HEK293T (cell line): ENCODE measurements at regions of chr2 and their contacts with region 1.

Region 1: GRCh38 chr2:54675738-54676137 is 47.7 kb upstream of the EML6 start:
- DNase-seq: no peak

Region 2: DNA sequence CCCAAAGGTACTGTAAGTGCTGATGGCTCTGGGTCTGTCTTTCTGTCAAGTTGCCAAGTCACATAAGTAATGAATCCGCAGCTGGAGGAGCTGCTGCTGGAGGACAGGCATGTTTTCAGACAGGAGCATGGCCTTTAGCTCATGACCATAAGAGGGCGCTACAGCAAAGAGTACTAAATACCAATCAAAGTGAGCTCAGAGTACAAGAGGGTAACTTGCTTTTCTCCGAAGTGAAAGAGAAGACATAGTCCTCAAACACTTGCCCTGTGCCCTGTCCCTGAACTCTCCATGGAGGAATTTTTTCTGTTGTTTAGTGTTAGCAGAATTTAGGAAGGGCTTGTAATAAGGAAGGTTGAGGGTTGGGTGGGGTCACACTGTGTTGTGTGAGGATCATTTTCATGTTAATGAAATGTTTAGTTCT is 10.3 kb before region 1 on chr2:
- CTCF ChIA-PET with region 1: interaction called, 15 read pairs
- POLR2A ChIA-PET with region 1: no interaction called
- DNase-seq: peak; percentile 51

Region 3: GRCh38 chr2:54809819-54810218 is 134.1 kb after region 1 on chr2:
- CTCF ChIA-PET with region 1: no interaction called
- POLR2A ChIA-PET with region 1: no interaction called
- DNase-seq: no peak